Posterior cingulate gyrus (tissue), 11 donors: ENCODE measurements at regions of chr3 and their contacts with region 1.

Region 1: GRCh38 chr3:377158-377561 is 180.6 kb downstream of the CHL1 start:
- DNase-seq: no peak

Region 2: GRCh38 chr3:43997-44676 is 333.0 kb before region 1 on chr3:
- intact Hi-C with region 1: loop called (anchors 1 kb)
- DNase-seq: no peak

Region 3: DNA sequence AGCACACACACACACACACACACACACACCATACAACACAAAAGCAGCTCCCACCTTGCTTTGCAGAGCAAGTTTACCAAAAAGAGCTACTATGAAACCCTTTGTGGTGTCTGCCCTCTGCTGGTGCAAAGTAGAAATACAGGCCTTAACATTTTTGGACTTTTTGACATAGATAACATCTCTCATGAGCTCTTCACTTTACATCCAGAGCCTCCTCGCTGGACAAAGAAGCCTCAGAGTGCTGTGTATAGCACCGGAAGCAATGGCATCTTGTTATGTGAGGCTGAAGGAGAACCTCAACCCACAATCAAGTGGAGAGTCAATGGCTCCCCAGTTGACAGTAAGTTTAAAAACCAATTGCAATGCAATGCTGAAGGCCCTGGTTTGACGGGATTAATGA is 22.7 kb before region 1 on chr3:
- intact Hi-C with region 1: no loop called
- DNase-seq: peak in 4 of 10 donors; percentile 18 to 52 (median 32)

Region 4: GRCh38 chr3:365268-365667 is 11.9 kb before region 1 on chr3:
- intact Hi-C with region 1: no loop called
- DNase-seq: no peak